K562 (cell line): ENCODE measurements at regions of chr9 and their contacts with region 1.

Region 1: DNA sequence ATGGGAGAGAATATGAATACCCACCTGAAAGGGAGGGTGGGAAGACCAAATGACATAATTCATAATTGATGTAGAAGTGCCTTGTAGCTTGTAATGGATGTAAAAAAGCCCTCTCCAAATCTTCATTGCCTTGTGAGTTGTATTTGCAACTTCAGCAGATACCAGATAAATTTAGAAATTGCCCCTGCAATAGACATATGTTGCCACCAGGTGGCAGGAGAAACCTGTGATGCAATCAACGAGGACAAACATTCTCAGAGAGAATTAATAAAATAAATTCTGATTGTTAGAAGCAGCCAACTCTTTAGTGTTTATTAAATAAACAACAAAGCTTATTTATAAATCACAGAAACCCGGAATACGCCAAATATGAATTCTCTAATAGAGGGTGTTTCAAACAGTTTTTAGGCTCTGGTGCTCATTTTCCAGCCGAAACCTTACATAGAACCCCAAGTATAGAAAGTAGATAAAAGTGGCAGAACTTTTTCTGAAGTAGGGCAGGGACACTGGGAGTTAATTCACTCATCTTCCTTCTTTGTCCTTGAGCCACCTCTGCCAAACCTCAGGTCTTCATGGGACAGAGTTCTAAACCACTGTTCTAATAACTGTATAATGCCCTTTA is 147.8 kb downstream of the TMEM38B start:
- DNase-seq: peak; percentile 51 to 55 (median 51)
- ATAC-seq: peak; percentile 58; the same call in 1 of the 3 replicates
- H3K4me3 ChIP-seq: no peak overlapping the region
- H3K27ac ChIP-seq: no peak overlapping the region
- H3K4me1 ChIP-seq: no peaks in the 10 kb centered on the region
- H3K27me3 ChIP-seq: no peaks in the 10 kb centered on the region
- CTCF ChIP-seq: peak; percentile 69 to 90 (median 77)
- EP300 ChIP-seq: no peak
- POLR2A ChIP-seq: no peak
- RAD21 ChIP-seq: peak; percentile 95 to 96

Region 2: DNA sequence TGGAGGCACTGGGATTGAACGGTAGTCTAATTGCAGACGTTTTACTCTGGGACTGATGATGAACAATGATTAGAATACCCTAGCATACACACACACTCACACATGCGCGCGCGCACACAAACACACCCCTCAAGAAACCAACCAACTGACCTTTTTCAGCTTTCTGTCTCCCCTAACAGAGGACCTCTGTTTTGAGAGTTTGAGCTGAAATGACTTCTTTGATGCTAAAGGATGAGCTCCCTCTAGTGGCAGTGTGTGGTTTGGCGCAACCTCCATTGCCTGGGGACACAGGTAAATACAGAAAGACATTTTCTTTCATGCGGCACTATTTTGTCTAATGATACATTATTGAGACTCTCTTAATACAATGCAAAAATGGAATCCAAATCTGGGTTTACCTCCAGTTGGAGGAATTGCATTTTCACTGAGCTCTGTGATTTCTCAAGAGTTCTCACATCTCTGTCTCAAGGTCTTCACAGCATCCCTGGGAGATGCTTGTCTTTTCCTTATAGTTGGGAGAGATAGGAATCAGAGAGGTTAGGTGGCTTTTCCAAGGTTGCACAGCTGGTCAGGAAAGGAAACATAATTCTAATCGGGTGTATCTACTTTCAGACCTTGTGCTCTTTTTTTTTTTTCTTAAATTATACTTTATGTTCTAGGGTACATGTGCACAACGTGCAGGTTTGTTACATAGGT is 39.7 kb after region 1 on chr9:
- CTCF ChIA-PET with region 1: interaction called, 24 read pairs
- POLR2A ChIA-PET with region 1: interaction called, 7 read pairs
- in situ Hi-C with region 1: no loop called
- intact Hi-C with region 1: loop called (anchors 1 kb)
- DNase-seq: peak; percentile 58 to 81 (median 62)
- ATAC-seq: peak; percentile 90
- H3K4me3 ChIP-seq: no peak overlapping the region
- H3K27ac ChIP-seq: no peak overlapping the region
- H3K4me1 ChIP-seq: peaks cover 0 to 14% of the 10 kb centered on the region in 2 experiments; a peak in 4 of 5 replicates
- H3K27me3 ChIP-seq: no peaks in the 10 kb centered on the region
- CTCF ChIP-seq: peak; percentile 78 to 93 (median 89)
- EP300 ChIP-seq: no peak
- POLR2A ChIP-seq: no peak
- RAD21 ChIP-seq: peak; percentile 80 to 92